ENCODE measurements at regions of chrX and their contacts with region 1.

Region 1: GRCh38 chrX:145848448-145848847 is 30.8 kb downstream of the SLITRK2 start:
- DNase-seq: no peak
- ATAC-seq: no peak
- H3K4me3 ChIP-seq: no peak overlapping the region
- H3K27ac ChIP-seq: no peak overlapping the region
- H3K4me1 ChIP-seq: no peaks in the 10 kb centered on the region
- H3K27me3 ChIP-seq: no peaks in the 10 kb centered on the region
- CTCF ChIP-seq: no peak

Region 2: DNA sequence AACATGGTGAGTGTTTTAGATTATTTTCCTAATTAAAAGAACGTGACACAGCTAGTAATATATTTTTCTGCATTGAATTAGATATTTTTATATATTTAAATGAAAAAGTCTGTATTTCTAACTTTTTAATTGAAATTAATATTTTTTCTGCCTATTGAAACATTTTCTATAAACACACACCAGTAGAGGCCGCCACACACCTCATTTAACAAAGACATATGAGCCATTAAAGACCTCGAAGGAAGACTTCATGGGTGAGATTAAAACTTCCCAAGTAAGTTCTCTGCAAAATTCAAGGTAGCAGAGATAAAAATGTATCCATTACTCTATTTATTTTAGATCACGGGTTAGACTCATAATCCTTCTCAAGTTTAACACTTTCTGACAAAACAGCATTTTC is 22.6 kb before region 1 on chrX:
- CTCF ChIA-PET with region 1: no interaction called
- POLR2A ChIA-PET with region 1: no interaction called
- in situ Hi-C with region 1: no loop called
- intact Hi-C with region 1: no loop called
- DNase-seq: no peak
- ATAC-seq: no peak
- H3K4me3 ChIP-seq: no peak overlapping the region
- H3K27ac ChIP-seq: no peak overlapping the region
- H3K4me1 ChIP-seq: no peaks in the 10 kb centered on the region
- H3K27me3 ChIP-seq: no peaks in the 10 kb centered on the region
- CTCF ChIP-seq: peak; percentile 47; the same call in 1 of the 2 replicates

Region 3: GRCh38 chrX:147333821-147334220 is 1485.4 kb after region 1 on chrX:
- CTCF ChIA-PET with region 1: no interaction called
- POLR2A ChIA-PET with region 1: interaction called, 17 read pairs
- in situ Hi-C with region 1: no loop called
- intact Hi-C with region 1: no loop called
- DNase-seq: no peak
- ATAC-seq: no peak
- H3K4me3 ChIP-seq: no peak overlapping the region
- H3K27ac ChIP-seq: no peak overlapping the region
- H3K4me1 ChIP-seq: no peaks in the 10 kb centered on the region
- H3K27me3 ChIP-seq: no peaks in the 10 kb centered on the region
- CTCF ChIP-seq: no peak

Measured in Panc1 (cell line).